ENCODE measurements at regions of chr5 and their contacts with region 1.

Region 1: DNA sequence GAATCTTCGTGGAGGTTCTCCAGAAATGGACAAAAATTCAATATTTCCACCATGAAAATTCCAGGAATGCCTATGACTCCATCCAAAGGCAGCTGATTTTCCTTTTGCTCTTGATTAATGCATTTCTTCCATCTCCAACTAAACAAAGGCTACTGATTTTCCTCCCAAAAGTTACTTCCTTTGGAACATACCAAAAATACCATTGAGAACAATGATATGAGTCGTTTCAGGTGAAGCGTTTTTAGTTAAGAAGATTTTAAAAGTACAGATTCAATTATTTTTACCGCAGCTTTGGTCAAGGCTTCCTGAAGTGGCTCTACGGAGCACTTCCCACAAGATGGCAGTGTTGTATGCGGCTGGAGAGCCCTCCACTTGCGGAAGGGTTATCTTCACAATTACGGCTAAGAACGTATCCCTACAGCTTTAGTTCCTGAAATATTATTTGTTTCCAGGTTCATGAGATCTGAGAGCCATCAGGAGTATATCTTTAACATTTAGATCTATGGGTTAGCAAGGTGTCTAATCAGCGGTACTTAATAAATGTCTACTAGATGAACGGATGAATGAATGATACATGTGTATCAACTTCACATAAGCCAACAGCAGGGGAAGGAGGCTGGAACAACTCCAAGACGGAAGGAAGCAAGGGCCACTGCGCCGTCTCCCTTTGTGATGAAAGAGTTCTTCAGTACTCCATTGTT is 35.9 kb upstream of the ARSB start:
- DNase-seq: peak; percentile 73
- H3K4me3 ChIP-seq: no peak overlapping the region
- H3K27ac ChIP-seq: no peak overlapping the region
- H3K4me1 ChIP-seq: peaks cover 10% of the 10 kb centered on the region
- H3K27me3 ChIP-seq: peaks cover 24% of the 10 kb centered on the region
- CTCF ChIP-seq: peak; percentile 94

Region 2: DNA sequence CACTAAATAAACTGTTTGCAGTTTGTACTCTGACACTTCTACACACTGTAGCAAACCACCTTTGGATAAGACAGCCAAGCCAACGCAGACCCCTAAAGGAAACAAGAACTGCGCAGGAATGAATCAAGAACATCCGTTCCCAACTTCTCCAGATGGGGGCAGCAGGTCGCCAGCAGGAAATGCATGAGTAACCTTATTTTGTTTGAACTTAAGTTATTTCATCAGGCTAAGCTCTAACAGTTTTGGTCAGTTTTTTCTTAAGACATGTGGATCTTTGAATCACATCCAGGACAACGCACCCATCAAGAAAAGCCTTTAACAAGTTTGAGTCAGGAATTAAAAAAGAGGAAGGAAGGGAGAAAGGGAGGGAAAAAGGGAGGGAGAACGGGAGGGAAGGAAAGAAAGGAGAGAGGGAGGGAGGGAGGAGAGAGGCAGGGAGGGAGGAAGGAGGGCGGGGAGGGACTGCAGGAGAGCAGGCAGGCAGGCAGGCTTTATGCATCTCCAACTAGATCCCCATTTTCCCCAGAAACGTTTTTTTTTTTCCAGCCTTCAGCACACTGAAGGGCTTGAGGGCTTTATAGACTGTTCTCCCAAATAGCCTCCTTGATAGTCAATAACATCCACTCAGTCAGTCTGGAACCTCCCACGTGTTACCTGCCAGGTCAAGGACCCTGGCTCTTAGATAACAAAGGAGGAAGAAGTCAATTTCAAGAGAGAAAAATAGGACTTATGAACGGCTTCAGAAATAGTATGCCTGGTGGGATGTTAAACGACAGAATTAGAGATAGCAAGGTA is 112.8 kb after region 1 on chr5:
- CTCF ChIA-PET with region 1: interaction called, 70 read pairs
- POLR2A ChIA-PET with region 1: no interaction called
- intact Hi-C with region 1: loop called (anchors 1 kb)
- DNase-seq: peak; percentile 88
- H3K4me3 ChIP-seq: peak overlapping the region; percentile 28
- H3K27ac ChIP-seq: peak overlapping the region; percentile 70
- H3K4me1 ChIP-seq: peaks cover 5% of the 10 kb centered on the region
- H3K27me3 ChIP-seq: no peaks in the 10 kb centered on the region
- CTCF ChIP-seq: peak; percentile 86

Region 3: GRCh38 chr5:79241535-79241979 is 220.5 kb after region 1 on chr5:
- CTCF ChIA-PET with region 1: no interaction called
- POLR2A ChIA-PET with region 1: no interaction called
- intact Hi-C with region 1: loop called (anchors 10 kb)
- DNase-seq: peak; percentile 11
- H3K4me3 ChIP-seq: no peak overlapping the region
- H3K27ac ChIP-seq: no peak overlapping the region
- H3K4me1 ChIP-seq: peaks cover 4% of the 10 kb centered on the region
- H3K27me3 ChIP-seq: peaks cover 12% of the 10 kb centered on the region
- CTCF ChIP-seq: no peak

Region 4: DNA sequence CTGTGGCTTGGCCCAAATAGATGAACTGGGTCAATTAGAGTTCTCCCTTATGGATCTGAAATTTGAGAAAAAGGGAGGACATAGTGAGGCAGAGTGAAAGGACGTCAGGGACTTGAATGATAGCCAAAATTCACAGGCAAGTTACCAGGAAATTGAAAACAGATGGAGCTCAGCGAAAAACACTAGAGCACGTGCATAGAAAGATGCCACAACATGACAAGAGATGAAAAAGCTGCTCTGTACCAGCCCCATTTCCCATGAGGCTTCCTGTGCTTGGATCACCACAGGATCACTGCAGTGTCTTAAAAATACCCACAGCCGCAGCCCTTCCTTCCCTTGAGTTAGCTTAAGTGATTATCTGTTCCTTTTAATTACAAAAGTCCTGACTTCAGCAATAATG is 532.0 kb after region 1 on chr5:
- CTCF ChIA-PET with region 1: no interaction called
- POLR2A ChIA-PET with region 1: no interaction called
- intact Hi-C with region 1: loop called (anchors 2 kb)
- DNase-seq: peak; percentile 88
- H3K4me3 ChIP-seq: no peak overlapping the region
- H3K27ac ChIP-seq: no peak overlapping the region
- H3K4me1 ChIP-seq: peaks cover 19% of the 10 kb centered on the region
- H3K27me3 ChIP-seq: peaks cover 12% of the 10 kb centered on the region
- CTCF ChIP-seq: no peak

Region 5: DNA sequence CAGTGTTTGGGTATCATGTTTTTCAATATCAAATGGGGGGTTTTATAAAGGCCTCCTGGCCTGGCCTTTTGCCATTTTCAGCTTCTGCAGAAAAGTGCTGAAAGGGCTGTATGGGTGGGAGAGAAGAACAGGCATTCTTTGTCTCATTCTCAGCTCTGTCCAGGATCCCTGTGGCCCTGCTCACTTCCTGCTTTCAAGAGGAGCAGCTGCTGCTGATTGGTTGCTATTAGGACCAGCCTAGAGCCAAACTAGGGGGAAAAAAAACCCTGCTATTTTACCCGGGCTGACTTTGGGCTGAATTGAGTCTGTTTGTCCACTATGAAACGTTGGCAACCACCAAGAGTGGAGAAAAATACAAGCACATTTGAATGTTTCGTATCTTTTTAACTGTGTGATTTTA is 785.7 kb after region 1 on chr5:
- CTCF ChIA-PET with region 1: no interaction called
- POLR2A ChIA-PET with region 1: no interaction called
- intact Hi-C with region 1: no loop called
- DNase-seq: peak; percentile 13
- H3K4me3 ChIP-seq: no peak overlapping the region
- H3K27ac ChIP-seq: no peak overlapping the region
- H3K4me1 ChIP-seq: no peaks in the 10 kb centered on the region
- H3K27me3 ChIP-seq: no peaks in the 10 kb centered on the region
- CTCF ChIP-seq: no peak

Measured in A673 (cell line).